Common myeloid progenitor, CD34-positive (primary cell): ENCODE measurements at regions of chr1 and their contacts with region 1.

Region 1: DNA sequence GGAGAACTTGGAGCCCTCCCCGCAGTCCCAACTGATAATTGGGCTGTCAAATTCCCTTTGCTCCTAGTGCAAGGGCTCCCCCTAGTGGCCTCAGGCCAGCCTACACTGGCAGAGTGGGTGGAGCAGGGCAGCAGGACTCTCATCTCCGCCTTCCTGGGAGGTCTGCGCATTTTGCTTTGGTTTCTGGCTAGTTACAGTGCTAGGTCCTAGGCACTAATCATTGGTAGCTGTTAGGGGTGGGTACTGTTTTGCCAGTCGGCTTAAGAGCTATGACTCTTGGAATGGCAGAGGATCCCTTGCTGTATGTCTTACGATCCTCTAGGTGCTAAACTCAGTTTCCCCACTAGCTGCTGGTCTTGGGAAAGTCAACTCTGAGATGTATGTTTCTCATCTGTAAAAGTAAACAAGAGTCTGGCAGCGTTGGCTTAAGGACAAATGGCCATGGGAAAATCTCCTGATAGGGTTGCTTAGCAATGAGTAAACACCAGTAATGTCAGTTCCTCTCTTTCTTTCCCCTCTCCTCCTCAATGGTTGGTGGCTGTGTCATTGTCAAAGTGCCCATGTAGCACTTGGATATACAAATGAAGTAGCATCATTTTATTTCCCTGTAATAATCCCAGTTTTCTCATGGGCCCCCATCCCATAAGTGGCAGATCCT is 2.1 kb upstream of the FYB2 start:
- DNase-seq: peak; percentile 59 to 81 (median 79)
- H3K4me3 ChIP-seq: peak overlapping the region in 1 of 7 experiments; percentile 8
- H3K27ac ChIP-seq: no peak overlapping the region
- H3K4me1 ChIP-seq: peaks cover 0 to 10% (median 0%) of the 10 kb centered on the region in 4 experiments
- H3K27me3 ChIP-seq: peaks cover 0 to 5% (median 0%) of the 10 kb centered on the region in 5 experiments

Region 2: GRCh38 chr1:56469640-56470371 is 351.5 kb before region 1 on chr1:
- CTCF ChIA-PET with region 1: no interaction called
- POLR2A ChIA-PET with region 1: no interaction called
- DNase-seq: peak in 1 of 3 donors; percentile 2
- H3K4me3 ChIP-seq: no peak overlapping the region
- H3K27ac ChIP-seq: no peak overlapping the region
- H3K4me1 ChIP-seq: peaks cover 9 to 13% (median 11%) of the 10 kb centered on the region in 4 experiments
- H3K27me3 ChIP-seq: peaks cover 0 to 3% (median 0%) of the 10 kb centered on the region in 5 experiments

Region 3: DNA sequence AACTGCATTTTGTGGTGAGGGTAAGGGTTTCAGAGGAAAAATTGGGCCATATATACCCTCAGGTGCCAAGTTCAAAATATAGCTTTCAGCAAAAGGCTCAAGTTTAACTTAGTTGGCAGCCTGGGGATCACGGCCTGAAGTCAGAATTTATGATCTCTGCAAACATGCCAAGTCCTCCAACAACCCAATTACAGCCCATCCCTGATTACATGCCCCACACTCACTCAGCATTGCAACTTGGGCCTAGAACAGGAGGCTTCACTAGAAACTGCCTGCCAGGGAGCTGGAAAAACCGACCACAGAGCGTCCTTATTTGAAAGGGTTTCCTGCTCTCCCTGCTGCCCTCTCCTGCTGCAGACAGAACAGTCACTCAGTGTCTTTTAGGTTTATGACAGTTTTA is 14.5 kb before region 1 on chr1:
- CTCF ChIA-PET with region 1: interaction called, 12 read pairs
- POLR2A ChIA-PET with region 1: no interaction called
- DNase-seq: peak in 1 of 3 donors; percentile 4
- H3K4me3 ChIP-seq: no peak overlapping the region
- H3K27ac ChIP-seq: no peak overlapping the region
- H3K4me1 ChIP-seq: no peaks in the 10 kb centered on the region
- H3K27me3 ChIP-seq: peaks cover 0 to 4% (median 0%) of the 10 kb centered on the region in 5 experiments